Activated CD4-positive, alpha-beta T cell treated with anti-CD3 and anti-CD28 coated beads, Interleukin-2, amount 10 ng/mL, durations not matched to agents 7 days and 5 days (primary cell): ENCODE measurements at regions of chr7 and their contacts with region 1.

Region 1: DNA sequence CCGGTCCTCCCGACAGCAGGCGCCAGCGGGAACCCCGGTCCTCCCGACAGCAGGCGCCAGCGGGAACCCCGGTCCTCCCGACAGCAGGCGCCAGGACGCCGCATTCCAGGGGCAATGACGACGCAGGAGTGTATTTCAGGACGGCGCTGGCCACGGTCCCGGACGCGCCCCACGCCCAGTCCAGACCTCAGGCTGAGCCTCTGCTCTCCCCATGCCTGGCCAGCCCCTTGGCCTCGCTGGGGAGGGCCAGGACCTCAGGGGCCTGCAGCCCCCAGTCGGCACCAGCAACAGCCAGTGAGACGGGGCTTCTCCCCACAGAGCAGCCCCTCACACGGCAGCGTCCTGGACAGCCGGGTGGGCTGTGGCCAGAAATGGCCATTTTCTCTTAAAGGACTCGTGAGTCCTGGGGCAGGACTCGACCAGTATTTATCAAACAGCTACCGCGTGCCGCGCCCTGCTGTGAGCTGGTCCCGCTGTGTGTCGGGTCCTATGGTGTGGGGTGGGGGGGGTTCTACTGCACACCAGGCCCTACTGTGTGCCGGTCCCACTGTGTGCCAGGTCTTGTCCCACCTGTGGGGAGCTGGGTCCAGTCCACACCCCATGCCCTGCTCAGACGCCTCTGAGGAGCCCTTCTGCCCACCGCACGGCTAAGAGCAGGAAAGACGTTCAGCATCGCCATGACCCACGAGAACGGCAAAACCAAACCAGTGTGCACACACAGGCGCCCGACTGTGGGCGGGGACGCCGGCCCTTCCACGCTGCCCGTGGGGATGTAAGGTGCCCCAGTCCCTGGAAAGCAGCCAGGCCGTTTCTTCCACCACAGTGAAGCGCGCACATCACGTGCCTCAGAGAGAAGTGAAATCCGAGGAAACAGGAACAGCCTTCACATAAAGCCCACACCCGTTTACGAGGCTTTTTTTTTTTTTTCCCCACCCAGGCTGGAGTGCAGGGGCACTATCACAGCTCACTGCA is 33.3 kb downstream of the GET4 start:
- DNase-seq: no peak
- H3K4me3 Mint-ChIP-seq: peak overlapping the region; percentile 7
- H3K27ac Mint-ChIP-seq: no peak overlapping the region
- H3K4me1 Mint-ChIP-seq: peaks cover 12% of the 10 kb centered on the region
- H3K27me3 Mint-ChIP-seq: peaks cover 4% of the 10 kb centered on the region

Region 2: DNA sequence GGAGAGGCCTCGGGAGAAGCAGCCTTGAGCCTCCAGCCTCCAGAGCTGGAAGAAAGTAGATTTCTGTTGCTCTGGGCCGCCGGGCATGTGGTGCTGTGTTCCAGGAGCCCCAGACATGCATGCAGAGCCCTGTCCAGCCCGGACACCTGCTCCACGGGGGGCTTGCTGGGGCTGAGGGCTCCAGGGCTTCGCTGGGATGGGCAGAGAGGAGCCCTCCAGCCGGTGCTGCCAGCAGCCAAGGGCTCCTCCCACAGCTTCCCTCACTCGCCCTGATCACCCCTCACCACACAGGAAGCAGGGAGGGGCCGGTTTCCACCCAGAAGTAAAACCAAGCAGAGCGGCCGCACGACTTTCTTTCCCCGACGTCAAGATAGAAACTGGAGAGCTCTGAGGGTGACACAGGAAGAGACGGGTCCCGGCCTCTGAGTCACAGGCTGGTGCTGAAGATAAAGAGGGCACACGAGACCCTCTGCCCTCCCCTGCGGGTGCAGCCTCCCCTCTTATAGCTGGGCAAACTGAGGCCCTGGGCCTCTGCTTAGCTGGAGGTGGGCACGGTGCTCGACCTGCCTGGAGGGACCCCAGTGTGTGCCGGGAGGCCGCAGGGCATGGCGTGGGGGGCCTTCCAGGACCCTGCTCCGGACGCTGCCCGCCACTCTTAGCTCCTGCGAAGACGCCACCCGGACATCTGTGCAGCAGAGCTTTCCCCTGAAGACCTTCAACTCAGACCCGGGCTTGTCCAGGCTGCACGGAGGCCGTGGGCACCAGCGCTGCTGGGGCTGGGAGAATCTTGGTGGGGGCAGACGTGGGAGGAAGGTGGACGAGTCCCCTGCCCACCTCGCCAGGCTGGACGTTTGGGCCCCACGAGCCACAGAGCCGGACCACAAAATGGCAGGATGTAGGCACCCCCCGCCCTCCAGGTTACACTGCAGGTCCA is 13.7 kb after region 1 on chr7:
- CTCF ChIA-PET with region 1: interaction called, 19 read pairs
- POLR2A ChIA-PET with region 1: no interaction called
- DNase-seq: peak; percentile 96
- H3K4me3 Mint-ChIP-seq: peak overlapping the region; percentile 78
- H3K27ac Mint-ChIP-seq: peak overlapping the region; percentile 94
- H3K4me1 Mint-ChIP-seq: peaks cover 36% of the 10 kb centered on the region
- H3K27me3 Mint-ChIP-seq: no peaks in the 10 kb centered on the region